MCF 10A (cell line): ENCODE measurements at regions of chr3 and their contacts with region 1.

Region 1: DNA sequence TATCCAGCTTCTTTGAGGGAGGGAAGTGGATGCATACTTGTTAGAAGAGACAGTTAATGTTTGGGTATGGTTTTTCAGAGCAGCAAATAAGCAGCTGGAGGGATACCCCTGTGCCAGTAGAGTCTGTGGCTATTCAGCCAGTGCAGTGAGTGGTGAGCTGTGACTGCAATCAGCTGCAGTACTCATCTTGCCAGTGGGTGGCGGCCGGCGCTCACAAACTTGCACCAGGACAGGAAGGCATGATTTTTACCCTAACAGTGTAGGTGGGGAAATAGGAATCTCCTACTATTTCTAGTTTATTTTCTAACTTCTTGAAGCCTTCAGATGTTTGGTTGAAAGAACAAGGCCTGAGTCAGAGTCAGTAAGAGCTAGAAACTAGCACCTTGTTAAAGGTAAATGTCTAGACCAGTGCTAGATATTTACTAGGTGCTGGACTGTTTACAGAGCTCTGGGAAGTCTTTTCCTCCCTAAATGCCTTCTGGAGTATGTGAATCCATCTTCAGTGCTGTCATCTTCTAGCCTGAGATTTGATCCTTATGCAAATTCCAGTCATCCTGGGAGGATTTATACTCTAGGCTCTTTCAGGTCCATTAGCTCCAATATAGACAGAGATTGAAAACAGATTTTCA is 23.6 kb downstream of the TIMP4 start:
- DNase-seq: peak; percentile 71
- H3K4me3 Mint-ChIP-seq: no peak overlapping the region
- H3K27ac Mint-ChIP-seq: no peak overlapping the region
- H3K4me1 Mint-ChIP-seq: peaks cover 8% of the 10 kb centered on the region
- H3K27me3 Mint-ChIP-seq: peaks cover 47% of the 10 kb centered on the region
- CTCF ChIP-seq: peak; percentile 93

Region 2: GRCh38 chr3:11944052-11944673 is 191.0 kb before region 1 on chr3:
- CTCF ChIA-PET with region 1: no interaction called
- POLR2A ChIA-PET with region 1: no interaction called
- intact Hi-C with region 1: loop called (anchors 5 kb)
- DNase-seq: peak; percentile 60
- H3K4me3 Mint-ChIP-seq: no peak overlapping the region
- H3K27ac Mint-ChIP-seq: no peak overlapping the region
- H3K4me1 Mint-ChIP-seq: no peaks in the 10 kb centered on the region
- H3K27me3 Mint-ChIP-seq: peaks cover 17% of the 10 kb centered on the region
- CTCF ChIP-seq: peak; percentile 50

Region 3: DNA sequence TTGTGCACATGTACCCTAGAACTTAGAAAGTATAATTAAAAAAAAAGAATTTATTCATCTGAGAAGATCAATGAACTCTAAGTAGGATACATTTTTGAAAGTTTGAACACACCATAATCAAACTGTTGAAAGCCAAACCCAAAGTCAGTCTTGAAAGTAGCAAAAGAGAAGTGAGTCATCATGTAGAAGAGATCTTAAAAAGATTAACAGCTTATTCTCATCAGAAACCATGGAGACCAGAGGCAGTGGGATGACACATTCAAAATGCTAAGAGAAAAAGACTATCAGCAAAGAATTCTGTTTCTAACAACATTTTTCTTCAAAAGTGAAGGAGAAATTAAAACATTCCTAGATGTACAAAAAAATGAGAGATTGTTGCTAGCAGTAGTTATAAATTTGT is 37.2 kb before region 1 on chr3:
- CTCF ChIA-PET with region 1: no interaction called
- POLR2A ChIA-PET with region 1: no interaction called
- intact Hi-C with region 1: no loop called
- DNase-seq: no peak
- H3K4me3 Mint-ChIP-seq: no peak overlapping the region
- H3K27ac Mint-ChIP-seq: no peak overlapping the region
- H3K4me1 Mint-ChIP-seq: no peaks in the 10 kb centered on the region
- H3K27me3 Mint-ChIP-seq: peaks cover 52% of the 10 kb centered on the region
- CTCF ChIP-seq: no peak

Region 4: GRCh38 chr3:12175844-12176453 is 40.8 kb after region 1 on chr3:
- CTCF ChIA-PET with region 1: interaction called, 279 read pairs
- POLR2A ChIA-PET with region 1: interaction called, 4 read pairs
- intact Hi-C with region 1: loop called (anchors 1 kb)
- DNase-seq: peak; percentile 72
- H3K4me3 Mint-ChIP-seq: no peak overlapping the region
- H3K27ac Mint-ChIP-seq: no peak overlapping the region
- H3K4me1 Mint-ChIP-seq: peaks cover 24% of the 10 kb centered on the region
- H3K27me3 Mint-ChIP-seq: no peaks in the 10 kb centered on the region
- CTCF ChIP-seq: peak; percentile 78

Region 5: DNA sequence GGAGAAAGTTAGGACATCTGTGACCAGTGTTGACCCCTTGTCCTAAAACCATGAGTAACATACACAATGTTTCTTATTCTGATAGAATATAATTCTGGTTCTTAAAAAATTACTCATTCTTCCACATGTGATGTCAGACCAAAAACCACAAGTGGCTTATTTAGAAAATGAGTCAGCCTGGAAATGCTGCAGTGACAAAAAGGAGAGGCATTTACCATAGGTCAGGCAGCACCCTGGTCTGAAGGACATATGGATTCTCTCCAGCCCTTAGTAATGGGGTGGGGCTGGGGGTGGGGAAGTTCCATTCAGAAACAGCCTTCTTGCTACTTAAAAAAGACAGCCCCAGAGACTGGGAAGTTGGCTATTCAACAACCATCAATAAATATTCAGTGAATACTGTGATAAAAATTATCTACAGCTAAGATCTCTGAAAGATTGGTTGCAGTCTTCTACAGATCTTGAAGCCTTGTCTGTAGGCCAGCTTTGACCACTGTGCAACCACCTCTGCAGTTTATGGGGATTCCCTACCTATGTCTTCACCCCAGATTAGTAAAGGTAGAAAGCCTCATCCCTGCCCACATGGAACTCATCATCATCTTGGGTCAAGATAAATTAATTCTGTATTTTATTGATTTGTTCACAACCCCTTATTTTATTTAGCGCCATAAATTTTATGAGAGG is 58.5 kb after region 1 on chr3:
- CTCF ChIA-PET with region 1: interaction called, 18 read pairs
- POLR2A ChIA-PET with region 1: no interaction called
- intact Hi-C with region 1: loop called (anchors 1 kb)
- DNase-seq: peak; percentile 97
- H3K4me3 Mint-ChIP-seq: peak overlapping the region; percentile 24
- H3K27ac Mint-ChIP-seq: peak overlapping the region; percentile 89
- H3K4me1 Mint-ChIP-seq: peaks cover 42% of the 10 kb centered on the region
- H3K27me3 Mint-ChIP-seq: no peaks in the 10 kb centered on the region
- CTCF ChIP-seq: no peak

Region 6: GRCh38 chr3:12349895-12350813 is 215.0 kb after region 1 on chr3:
- CTCF ChIA-PET with region 1: interaction called, 4 read pairs
- POLR2A ChIA-PET with region 1: no interaction called
- intact Hi-C with region 1: loop called (anchors 5 kb)
- DNase-seq: peak; percentile 95
- H3K4me3 Mint-ChIP-seq: peak overlapping the region; percentile 28
- H3K27ac Mint-ChIP-seq: no peak overlapping the region
- H3K4me1 Mint-ChIP-seq: peaks cover 55% of the 10 kb centered on the region
- H3K27me3 Mint-ChIP-seq: no peaks in the 10 kb centered on the region
- CTCF ChIP-seq: no peak

Region 7: GRCh38 chr3:12556671-12557472 is 421.7 kb after region 1 on chr3 and contains the start of gene MKRN2:
- CTCF ChIA-PET with region 1: interaction called, 3 read pairs
- POLR2A ChIA-PET with region 1: no interaction called
- intact Hi-C with region 1: loop called (anchors 1 kb)
- DNase-seq: peak; percentile 89
- H3K4me3 Mint-ChIP-seq: peak within 1 kb of the TSS; percentile 73
- H3K27ac Mint-ChIP-seq: peak within 1 kb of the TSS; percentile 65
- H3K4me1 Mint-ChIP-seq: peaks cover 35% of the 10 kb centered on the region
- H3K27me3 Mint-ChIP-seq: no peaks in the 10 kb centered on the region
- CTCF ChIP-seq: no peak
- total RNA-seq, gene MKRN2: 22.0 and 25.6 TPM in 2 replicates

Region 8: GRCh38 chr3:12891985-12892839 is 757.1 kb after region 1 on chr3:
- CTCF ChIA-PET with region 1: no interaction called
- POLR2A ChIA-PET with region 1: no interaction called
- intact Hi-C with region 1: loop called (anchors 1 kb)
- DNase-seq: peak; percentile 65
- H3K4me3 Mint-ChIP-seq: no peak overlapping the region
- H3K27ac Mint-ChIP-seq: no peak overlapping the region
- H3K4me1 Mint-ChIP-seq: peaks cover 11% of the 10 kb centered on the region
- H3K27me3 Mint-ChIP-seq: peaks cover 31% of the 10 kb centered on the region
- CTCF ChIP-seq: peak; percentile 84